OCI-LY7 (cell line): ENCODE measurements at regions of chr19 and their contacts with region 1.

Region 1: DNA sequence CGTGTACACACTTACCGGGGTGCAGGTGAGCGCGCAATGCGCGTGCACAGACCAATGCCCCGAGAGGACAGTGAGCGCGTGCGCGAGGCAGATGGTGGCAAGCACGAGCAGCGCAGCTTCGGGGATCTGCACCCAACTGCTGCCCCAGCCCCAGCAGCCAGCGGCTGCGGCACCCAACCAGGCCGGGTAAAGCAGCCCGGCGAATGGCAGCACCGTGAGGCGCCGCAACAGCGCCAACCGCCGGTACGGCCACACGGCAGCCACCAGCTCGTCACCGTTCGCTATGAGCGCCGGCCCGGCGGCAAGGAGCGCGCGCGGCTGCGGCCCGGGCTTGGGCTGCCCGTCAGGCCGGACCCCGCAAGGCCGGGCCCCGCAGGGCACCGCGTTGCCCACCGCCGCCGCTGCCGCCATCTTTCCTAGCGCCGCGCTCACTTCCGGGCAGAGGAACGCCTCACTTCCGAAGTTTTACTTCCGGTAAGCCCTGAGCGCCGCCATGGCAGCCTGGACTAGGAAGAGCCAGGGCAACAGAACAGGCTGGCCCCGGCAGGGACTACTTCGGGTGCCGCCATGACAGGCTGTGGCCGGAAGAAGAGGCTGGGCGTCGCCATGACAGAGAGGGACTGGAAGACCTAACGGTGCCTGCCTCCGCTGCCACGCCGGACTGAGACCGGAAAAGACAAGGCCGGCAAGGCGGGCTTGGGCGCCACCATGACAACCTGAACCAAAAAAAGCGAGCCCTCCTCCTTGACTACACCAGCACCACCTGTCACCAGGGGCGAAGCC is at the start of gene ATP13A1:
- DNase-seq: peak; percentile 98
- H3K4me3 ChIP-seq: peak within 1 kb of the TSS; percentile 88
- H3K27ac ChIP-seq: peak within 1 kb of the TSS; percentile 88
- H3K4me1 ChIP-seq: peaks cover 55% of the 10 kb centered on the region
- CTCF ChIP-seq: peak; percentile 49
- total RNA-seq, gene ATP13A1: 41.0 and 58.3 TPM in 2 replicates

Region 2: GRCh38 chr19:19320362-19321142 is 342.9 kb before region 1 on chr19 and contains the starts of genes MAU2 and SUGP1:
- CTCF ChIA-PET with region 1: no interaction called
- POLR2A ChIA-PET with region 1: no interaction called
- intact Hi-C with region 1: no loop called
- DNase-seq: peak; percentile 95
- H3K4me3 ChIP-seq: peak within 1 kb of the TSS; percentile 86
- H3K27ac ChIP-seq: peak within 1 kb of the TSS; percentile 68
- H3K4me1 ChIP-seq: peaks cover 26% of the 10 kb centered on the region
- CTCF ChIP-seq: no peak
- total RNA-seq, gene MAU2: 31.9 and 58.7 TPM in 2 replicates
- total RNA-seq, gene SUGP1: 34.6 and 37.9 TPM in 2 replicates

Region 3: GRCh38 chr19:19404879-19405860 is 258.3 kb before region 1 on chr19 and contains the start of gene GATAD2A:
- CTCF ChIA-PET with region 1: no interaction called
- POLR2A ChIA-PET with region 1: no interaction called
- intact Hi-C with region 1: loop called (anchors 10 kb)
- DNase-seq: peak; percentile 90
- H3K4me3 ChIP-seq: peak within 1 kb of the TSS; percentile 80
- H3K27ac ChIP-seq: peak within 1 kb of the TSS; percentile 61
- H3K4me1 ChIP-seq: peaks cover 46% of the 10 kb centered on the region
- CTCF ChIP-seq: peak; percentile 42
- total RNA-seq, gene GATAD2A: 62.8 and 73.4 TPM in 2 replicates

Region 4: DNA sequence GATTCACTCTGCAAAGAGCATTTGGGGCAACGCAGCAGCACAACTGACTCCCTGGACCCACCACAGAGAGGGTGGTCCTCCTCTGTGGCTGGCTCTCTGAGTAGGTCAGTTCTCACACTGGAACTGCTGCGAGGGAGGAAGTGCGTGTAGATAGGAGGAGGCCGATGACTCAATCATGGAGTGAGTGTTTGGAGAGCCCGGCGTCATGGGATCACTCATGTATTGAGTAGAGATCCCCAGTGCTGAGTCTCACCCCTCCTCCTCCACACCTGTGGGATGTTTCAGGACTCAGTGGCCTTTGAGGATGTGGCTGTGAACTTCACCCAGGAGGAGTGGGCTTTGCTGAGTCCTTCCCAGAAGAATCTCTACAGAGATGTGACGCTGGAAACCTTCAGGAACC is 14.1 kb after region 1 on chr19:
- CTCF ChIA-PET with region 1: no interaction called
- POLR2A ChIA-PET with region 1: no interaction called
- intact Hi-C with region 1: no loop called
- DNase-seq: no peak
- H3K4me3 ChIP-seq: no peak overlapping the region
- H3K27ac ChIP-seq: no peak overlapping the region
- H3K4me1 ChIP-seq: no peaks in the 10 kb centered on the region
- CTCF ChIP-seq: no peak

Region 5: GRCh38 chr19:19776041-19777008 is 112.9 kb after region 1 on chr19:
- CTCF ChIA-PET with region 1: interaction called, 3 read pairs
- POLR2A ChIA-PET with region 1: interaction called, 4 read pairs
- intact Hi-C with region 1: loop called (anchors 1 kb)
- DNase-seq: peak; percentile 96
- H3K4me3 ChIP-seq: peak overlapping the region; percentile 78
- H3K27ac ChIP-seq: peak overlapping the region; percentile 6
- H3K4me1 ChIP-seq: peaks cover 23% of the 10 kb centered on the region
- CTCF ChIP-seq: no peak

Region 6: GRCh38 chr19:19865739-19866481 is 202.5 kb after region 1 on chr19 and contains the start of gene ZNF253:
- CTCF ChIA-PET with region 1: no interaction called
- POLR2A ChIA-PET with region 1: interaction called, 5 read pairs
- intact Hi-C with region 1: loop called (anchors 1 kb)
- DNase-seq: peak; percentile 98
- H3K4me3 ChIP-seq: peak within 1 kb of the TSS; percentile 93
- H3K27ac ChIP-seq: peak within 1 kb of the TSS; percentile 89
- H3K4me1 ChIP-seq: peaks cover 20% of the 10 kb centered on the region
- CTCF ChIP-seq: no peak
- total RNA-seq, gene ZNF253: 20.5 and 29.9 TPM in 2 replicates

Region 7: GRCh38 chr19:20039203-20039723 is 375.8 kb after region 1 on chr19 and contains the start of gene ZNF682:
- CTCF ChIA-PET with region 1: no interaction called
- POLR2A ChIA-PET with region 1: no interaction called
- intact Hi-C with region 1: loop called (anchors 2 kb)
- DNase-seq: peak; percentile 98
- H3K4me3 ChIP-seq: peak within 1 kb of the TSS; percentile 73
- H3K27ac ChIP-seq: peak within 1 kb of the TSS; percentile 59
- H3K4me1 ChIP-seq: peaks cover 11% of the 10 kb centered on the region
- CTCF ChIP-seq: no peak
- total RNA-seq, gene ZNF682: 9.1 and 10.5 TPM in 2 replicates